BJ (cell line): ENCODE measurements at regions of chr6 and their contacts with region 1.

Region 1: GRCh38 chr6:3427687-3428085 is 29.2 kb downstream of the SLC22A23 start:
- DNase-seq: no peak
- H3K4me3 ChIP-seq: no peak overlapping the region
- H3K27me3 ChIP-seq: peaks cover 8% of the 10 kb centered on the region
- CTCF ChIP-seq: no peak

Region 2: DNA sequence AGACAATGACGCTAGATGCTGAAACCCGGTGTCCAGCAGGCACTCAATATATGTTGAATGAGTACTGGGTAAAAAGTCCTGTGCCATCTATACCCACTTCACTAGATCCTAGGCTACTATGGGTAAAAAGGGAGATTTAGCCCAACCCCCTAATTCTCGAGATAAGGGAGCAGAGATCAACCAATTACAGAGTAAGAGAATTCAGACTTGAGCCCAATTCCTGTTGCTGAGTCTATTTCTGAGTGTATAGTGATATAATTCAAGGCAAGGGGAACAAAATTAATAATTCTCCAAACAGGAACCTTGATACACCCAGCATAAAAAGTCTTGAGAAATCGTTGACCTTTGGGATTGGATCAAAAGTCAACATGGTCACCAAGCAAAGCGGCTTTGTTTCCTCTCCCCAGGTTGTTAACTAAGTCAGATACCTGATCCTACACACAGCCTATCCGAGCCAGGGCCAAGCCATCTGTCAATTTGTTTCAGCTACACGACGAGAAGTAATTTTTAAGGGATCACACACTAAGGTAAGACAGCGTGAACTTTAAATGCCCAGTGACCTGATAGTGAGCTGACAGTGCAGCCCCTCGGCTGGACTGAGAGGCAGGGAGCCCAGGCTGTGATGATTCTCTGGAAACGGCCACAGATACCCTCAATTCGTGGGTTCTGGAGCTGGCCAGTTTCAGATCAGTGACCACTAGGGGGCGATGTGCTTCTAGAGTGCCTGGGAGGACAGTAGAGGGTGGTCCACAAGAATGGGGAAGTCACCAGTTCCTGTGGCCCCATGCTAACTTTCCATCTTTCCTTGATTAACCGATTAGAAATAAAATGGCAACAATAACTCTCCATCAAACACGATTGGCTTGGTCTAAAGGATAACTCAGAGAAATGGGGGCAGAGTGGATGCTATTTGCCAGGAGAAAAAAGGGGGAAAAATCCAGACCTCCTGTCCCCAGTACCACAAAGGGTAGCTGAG is 17.0 kb before region 1 on chr6:
- CTCF ChIA-PET with region 1: interaction called, 29 read pairs
- POLR2A ChIA-PET with region 1: no interaction called
- DNase-seq: no peak
- H3K4me3 ChIP-seq: no peak overlapping the region
- H3K27me3 ChIP-seq: no peaks in the 10 kb centered on the region
- CTCF ChIP-seq: peak; percentile 86